T-cell (primary cell): ENCODE measurements at regions of chr4 and their contacts with region 1.

Region 1: GRCh38 chr4:13527981-13528820 is 16.1 kb downstream of the NKX3-2 start:
- DNase-seq: no peak
- ATAC-seq: peak in 3 of 4 experiments; percentile 21 to 52 (median 29)
- H3K4me3 ChIP-seq: peak overlapping the region in 1 of 2 donors; percentile 7
- H3K4me3 Mint-ChIP-seq: peak overlapping the region in 2 of 3 donors; percentile 26 to 57
- H3K27ac ChIP-seq: no peak overlapping the region
- H3K27ac Mint-ChIP-seq: no peak overlapping the region
- H3K4me1 ChIP-seq: peaks cover 0 to 35% of the 10 kb centered on the region in 2 experiments
- H3K4me1 Mint-ChIP-seq: peaks cover 24 to 27% (median 25%) of the 10 kb centered on the region in 3 donors
- H3K27me3 ChIP-seq: peaks cover 42 to 87% of the 10 kb centered on the region in 2 experiments
- H3K27me3 Mint-ChIP-seq: peaks cover 80 to 90% of the 10 kb centered on the region in 2 donors

Region 2: DNA sequence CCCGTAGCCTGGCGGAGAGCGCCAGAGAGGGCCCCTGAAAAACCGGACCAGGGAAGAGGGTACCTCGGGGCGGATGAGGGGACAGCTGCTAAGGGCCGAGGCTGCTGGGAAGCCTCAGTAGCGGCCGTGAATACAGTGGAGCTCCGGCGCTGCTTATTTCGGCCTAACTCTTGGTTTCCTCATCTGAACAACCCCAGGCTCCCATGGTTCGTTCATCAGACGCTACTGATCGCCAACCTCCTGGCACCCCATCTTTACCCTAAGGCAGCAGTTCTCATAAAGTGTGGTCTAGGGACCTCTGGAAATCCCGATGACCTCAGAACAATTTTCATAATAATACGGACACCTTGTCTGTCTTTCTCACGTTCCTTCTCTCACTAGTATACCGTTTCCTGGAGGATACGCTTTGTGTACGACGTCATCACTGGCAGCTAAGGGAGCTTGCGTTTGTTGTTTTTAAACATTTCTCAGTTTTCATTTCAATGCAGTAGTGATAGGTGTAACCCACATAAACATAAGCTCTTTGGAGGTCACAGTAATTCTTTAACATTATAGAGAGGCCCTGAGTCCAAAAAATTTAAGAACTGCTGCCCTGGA is 43.4 kb before region 1 on chr4:
- CTCF ChIA-PET with region 1: interaction called in 1 of 2 experiments, 10 read pairs
- POLR2A ChIA-PET with region 1: no interaction called
- DNase-seq: peak in 14 of 35 experiments; percentile 3 to 77 (median 34)
- ATAC-seq: peak; percentile 29 to 51 (median 40)
- H3K4me3 ChIP-seq: peak overlapping the region; percentile 73 to 86
- H3K4me3 Mint-ChIP-seq: peak overlapping the region; percentile 73 to 92 (median 91)
- H3K27ac ChIP-seq: peak overlapping the region; percentile 98
- H3K27ac Mint-ChIP-seq: peak overlapping the region; percentile 92 to 99
- H3K4me1 ChIP-seq: peaks cover 11 to 18% of the 10 kb centered on the region in 2 experiments
- H3K4me1 Mint-ChIP-seq: peaks cover 24 to 29% (median 26%) of the 10 kb centered on the region in 3 donors
- H3K27me3 ChIP-seq: peaks cover 0 to 9% of the 10 kb centered on the region in 2 experiments
- H3K27me3 Mint-ChIP-seq: peaks cover 14 to 18% of the 10 kb centered on the region in 2 donors

Region 3: GRCh38 chr4:13728761-13729160 is 200.6 kb after region 1 on chr4:
- CTCF ChIA-PET with region 1: no interaction called
- POLR2A ChIA-PET with region 1: no interaction called
- DNase-seq: no peak
- ATAC-seq: no peak
- H3K4me3 ChIP-seq: no peak overlapping the region
- H3K4me3 Mint-ChIP-seq: no peak overlapping the region
- H3K27ac ChIP-seq: no peak overlapping the region
- H3K27ac Mint-ChIP-seq: no peak overlapping the region
- H3K4me1 ChIP-seq: no peaks in the 10 kb centered on the region
- H3K4me1 Mint-ChIP-seq: no peaks in the 10 kb centered on the region
- H3K27me3 ChIP-seq: peaks cover 0 to 2% of the 10 kb centered on the region in 2 experiments
- H3K27me3 Mint-ChIP-seq: peaks cover 0 to 8% of the 10 kb centered on the region in 2 donors

Region 4: GRCh38 chr4:13907255-13907751 is 379.1 kb after region 1 on chr4:
- CTCF ChIA-PET with region 1: no interaction called
- POLR2A ChIA-PET with region 1: no interaction called
- DNase-seq: no peak
- ATAC-seq: no peak
- H3K4me3 ChIP-seq: no peak overlapping the region
- H3K4me3 Mint-ChIP-seq: no peak overlapping the region
- H3K27ac ChIP-seq: no peak overlapping the region
- H3K27ac Mint-ChIP-seq: no peak overlapping the region
- H3K4me1 ChIP-seq: no peaks in the 10 kb centered on the region
- H3K4me1 Mint-ChIP-seq: no peaks in the 10 kb centered on the region
- H3K27me3 ChIP-seq: no peaks in the 10 kb centered on the region
- H3K27me3 Mint-ChIP-seq: peaks cover 0 to 3% of the 10 kb centered on the region in 2 donors